Activated CD4-positive, alpha-beta memory T cell treated with anti-CD3 and anti-CD28 coated beads, Interleukin-2, amount 10 ng/mL, durations not matched to agents 7 days and 5 days (primary cell): ENCODE measurements at regions of chr6 and their contacts with region 1.

Region 1: DNA sequence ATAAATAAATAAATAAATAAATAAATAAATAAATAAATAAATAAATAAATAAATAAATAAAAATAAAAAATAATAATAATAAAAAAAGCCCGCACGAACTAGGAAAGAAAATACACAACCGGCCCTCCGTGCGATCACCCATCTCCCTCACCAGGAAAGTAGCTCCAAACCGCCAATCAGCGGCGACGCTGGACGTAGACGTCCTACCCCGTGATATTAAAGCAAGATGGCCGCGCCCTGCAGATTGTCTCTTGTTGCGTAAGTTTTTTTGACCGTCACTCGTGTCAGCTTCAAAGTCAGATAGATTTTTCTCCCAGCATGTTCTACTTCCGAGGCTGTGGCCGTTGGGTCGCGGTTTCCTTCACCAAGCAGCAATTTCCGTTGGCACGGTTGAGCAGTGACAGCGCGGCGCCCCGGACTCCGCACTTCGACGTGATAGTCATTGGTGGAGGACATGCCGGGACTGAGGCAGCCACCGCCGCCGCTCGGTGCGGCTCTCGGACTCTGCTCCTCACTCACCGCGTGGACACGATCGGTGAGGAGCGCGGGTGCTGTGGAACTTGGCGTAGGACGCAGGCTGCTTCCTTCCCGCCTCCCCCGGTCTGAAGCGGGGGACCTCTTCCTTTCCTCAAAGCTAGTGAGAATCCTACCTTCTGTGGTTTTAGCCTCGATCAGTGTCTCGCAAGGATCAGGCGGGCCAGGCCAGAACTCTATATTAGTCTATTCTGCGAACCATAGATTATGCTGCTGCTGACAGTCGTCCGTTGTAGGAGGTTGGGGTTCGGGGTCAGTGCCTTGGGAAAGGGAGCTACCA is at the start of gene MTO1:
- DNase-seq: peak; percentile 90
- H3K4me3 Mint-ChIP-seq: peak within 1 kb of the TSS; percentile 88
- H3K27ac Mint-ChIP-seq: peak within 1 kb of the TSS; percentile 96
- H3K4me1 Mint-ChIP-seq: peaks cover 60% of the 10 kb centered on the region
- H3K27me3 Mint-ChIP-seq: no peaks in the 10 kb centered on the region
- total RNA-seq, gene MTO1: 62.1 to 66.4 TPM

Region 2: DNA sequence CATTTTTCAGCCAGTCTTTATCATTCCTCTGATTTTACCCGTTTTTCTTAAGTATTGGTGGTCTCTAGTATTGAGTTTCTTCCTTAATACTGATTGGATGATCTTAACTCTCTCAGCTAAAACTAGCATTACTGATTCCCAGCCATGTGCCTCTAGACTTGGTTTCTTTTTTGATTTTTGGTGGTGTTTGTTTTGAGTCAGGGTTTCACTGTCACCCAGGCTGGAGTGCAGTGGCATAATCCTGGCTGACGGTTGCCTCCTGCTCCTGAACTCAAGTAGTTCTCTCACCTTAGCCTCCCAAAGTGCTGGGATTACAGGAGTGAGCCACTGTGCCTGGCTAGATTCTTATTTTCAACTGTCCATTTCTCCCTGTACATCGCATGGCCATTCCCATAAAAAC is 132.5 kb before region 1 on chr6:
- CTCF ChIA-PET with region 1: no interaction called
- POLR2A ChIA-PET with region 1: no interaction called
- DNase-seq: no peak
- H3K4me3 Mint-ChIP-seq: no peak overlapping the region
- H3K27ac Mint-ChIP-seq: no peak overlapping the region
- H3K4me1 Mint-ChIP-seq: peaks cover 14% of the 10 kb centered on the region
- H3K27me3 Mint-ChIP-seq: peaks cover 27% of the 10 kb centered on the region

Region 3: DNA sequence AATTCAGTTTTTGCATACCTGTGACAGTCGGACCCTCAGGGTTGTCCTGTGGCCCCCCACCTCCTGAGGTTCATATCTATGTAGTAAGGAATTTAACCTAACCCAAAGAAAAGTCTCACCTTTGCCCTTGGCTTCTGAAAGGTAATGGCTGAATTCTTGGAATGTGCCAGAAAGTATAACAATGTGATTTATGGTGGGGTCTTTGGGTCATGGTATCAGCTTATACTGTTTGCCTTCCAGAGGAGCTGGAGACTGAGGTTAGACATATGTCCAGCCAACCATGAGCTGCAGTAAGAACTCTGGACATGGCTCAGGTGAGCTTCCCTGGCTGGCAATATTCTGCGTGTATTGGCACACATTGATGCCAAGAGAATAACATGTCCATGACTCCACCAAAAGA is 40.2 kb before region 1 on chr6:
- CTCF ChIA-PET with region 1: no interaction called
- POLR2A ChIA-PET with region 1: interaction called, 19 read pairs
- DNase-seq: no peak
- H3K4me3 Mint-ChIP-seq: no peak overlapping the region
- H3K27ac Mint-ChIP-seq: peak overlapping the region; percentile 98
- H3K4me1 Mint-ChIP-seq: peaks cover 44% of the 10 kb centered on the region
- H3K27me3 Mint-ChIP-seq: no peaks in the 10 kb centered on the region

Region 4: GRCh38 chr6:73451223-73452107 is 10.3 kb before region 1 on chr6:
- CTCF ChIA-PET with region 1: interaction called, 58 read pairs
- POLR2A ChIA-PET with region 1: interaction called, 265 read pairs
- DNase-seq: peak; percentile 57
- H3K4me3 Mint-ChIP-seq: peak overlapping the region; percentile 95
- H3K27ac Mint-ChIP-seq: peak overlapping the region; percentile 86
- H3K4me1 Mint-ChIP-seq: peaks cover 50% of the 10 kb centered on the region
- H3K27me3 Mint-ChIP-seq: no peaks in the 10 kb centered on the region

Region 5: DNA sequence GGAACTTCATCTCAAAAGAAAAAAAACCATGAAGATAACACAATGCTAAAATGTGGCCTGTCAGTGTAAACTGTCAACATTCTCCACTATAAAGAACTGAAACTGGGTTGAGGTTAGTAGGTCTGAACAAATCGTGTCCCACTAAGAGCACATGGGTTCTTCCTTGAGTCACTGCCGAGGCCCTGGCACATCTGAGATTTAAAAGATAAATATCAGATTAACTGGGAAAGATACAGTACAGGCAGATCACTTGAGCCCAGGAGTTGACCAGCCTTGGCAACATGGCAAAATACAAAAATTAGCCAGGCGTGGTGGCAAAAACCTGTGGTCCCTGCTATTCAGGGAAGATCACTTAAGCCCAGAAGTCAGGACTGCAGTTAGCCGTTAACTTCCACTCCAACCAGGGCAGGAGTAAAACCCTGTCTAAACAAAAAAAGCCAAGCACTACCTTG is 53.5 kb after region 1 on chr6:
- CTCF ChIA-PET with region 1: interaction called, 12 read pairs
- POLR2A ChIA-PET with region 1: interaction called, 172 read pairs
- DNase-seq: no peak
- H3K4me3 Mint-ChIP-seq: no peak overlapping the region
- H3K27ac Mint-ChIP-seq: peak overlapping the region; percentile 75
- H3K4me1 Mint-ChIP-seq: peaks cover 55% of the 10 kb centered on the region
- H3K27me3 Mint-ChIP-seq: no peaks in the 10 kb centered on the region

Region 6: DNA sequence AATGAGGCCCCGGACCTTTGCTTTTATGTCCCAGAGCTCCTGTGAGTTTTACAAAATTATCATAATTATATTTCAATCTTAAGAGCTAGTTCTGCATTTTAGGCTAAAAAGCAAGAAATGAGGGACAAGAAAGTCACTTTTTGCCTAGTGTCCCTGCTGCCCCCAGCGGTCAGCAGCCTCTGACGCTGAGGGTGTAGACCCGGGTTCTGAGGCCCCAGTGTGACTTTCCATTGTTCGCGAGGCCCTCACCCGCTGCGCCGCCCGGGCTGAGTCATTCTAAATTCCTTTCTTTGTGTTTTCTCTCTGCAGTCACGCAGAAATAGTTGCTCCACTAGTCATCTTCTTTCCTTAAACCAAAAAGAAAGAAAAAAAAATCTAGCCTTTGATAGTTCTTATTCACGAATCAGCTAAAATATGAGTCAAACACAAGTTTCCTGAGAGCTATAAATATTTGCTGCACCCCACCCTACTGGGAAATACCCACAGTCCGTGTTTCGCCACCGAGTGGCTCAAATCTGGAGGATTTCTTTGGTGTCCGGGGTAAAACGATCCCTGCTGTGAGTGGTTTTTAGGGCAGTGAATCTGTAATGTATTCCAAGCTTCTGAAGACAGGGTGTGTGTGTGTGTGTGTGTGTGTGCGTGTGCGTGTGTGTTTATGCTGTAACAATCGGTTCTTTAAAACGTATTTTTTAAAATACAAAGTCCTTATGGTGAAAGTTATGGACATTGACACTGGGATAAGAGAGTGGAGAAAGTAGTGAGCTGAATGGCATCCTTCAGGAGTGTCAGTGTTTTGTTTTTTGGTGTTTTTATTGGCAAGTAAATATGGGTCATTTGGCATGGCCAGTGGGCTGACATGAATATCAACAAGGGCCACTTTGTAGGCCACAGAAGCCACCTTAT is 118.8 kb after region 1 on chr6:
- CTCF ChIA-PET with region 1: no interaction called
- POLR2A ChIA-PET with region 1: interaction called, 10 read pairs
- DNase-seq: peak; percentile 70
- H3K4me3 Mint-ChIP-seq: peak overlapping the region; percentile 65
- H3K27ac Mint-ChIP-seq: peak overlapping the region; percentile 91
- H3K4me1 Mint-ChIP-seq: peaks cover 31% of the 10 kb centered on the region
- H3K27me3 Mint-ChIP-seq: no peaks in the 10 kb centered on the region